ENCODE measurements at regions of chr4 and their contacts with region 1.

Region 1: DNA sequence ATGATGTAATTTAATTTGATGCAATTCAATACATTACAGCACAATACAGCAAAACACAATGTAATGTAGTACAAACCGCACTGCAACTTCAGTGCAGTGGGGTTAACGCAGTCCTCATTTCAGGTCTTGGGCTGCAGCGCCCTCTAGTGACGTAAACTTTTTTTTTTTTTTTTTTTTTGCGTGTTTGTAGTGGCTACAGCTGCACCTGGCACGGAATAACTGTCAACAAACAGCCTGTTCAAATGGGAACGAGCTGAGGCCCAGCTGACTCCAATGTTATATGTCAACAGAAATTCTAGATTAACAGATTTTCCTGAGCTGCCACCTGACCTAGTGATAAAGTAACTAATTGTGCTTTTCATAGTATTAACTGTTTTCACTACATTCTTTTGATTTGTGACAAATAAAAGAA is 33.5 kb upstream of the RASSF6 start:
- DNase-seq: peak; percentile 52
- ATAC-seq: peak; percentile 76 to 81
- H3K4me3 ChIP-seq: no peak overlapping the region
- H3K27ac ChIP-seq: no peak overlapping the region
- H3K4me1 ChIP-seq: peaks cover 6% of the 10 kb centered on the region
- H3K27me3 ChIP-seq: no peaks in the 10 kb centered on the region
- CTCF ChIP-seq: peak; percentile 52

Region 2: DNA sequence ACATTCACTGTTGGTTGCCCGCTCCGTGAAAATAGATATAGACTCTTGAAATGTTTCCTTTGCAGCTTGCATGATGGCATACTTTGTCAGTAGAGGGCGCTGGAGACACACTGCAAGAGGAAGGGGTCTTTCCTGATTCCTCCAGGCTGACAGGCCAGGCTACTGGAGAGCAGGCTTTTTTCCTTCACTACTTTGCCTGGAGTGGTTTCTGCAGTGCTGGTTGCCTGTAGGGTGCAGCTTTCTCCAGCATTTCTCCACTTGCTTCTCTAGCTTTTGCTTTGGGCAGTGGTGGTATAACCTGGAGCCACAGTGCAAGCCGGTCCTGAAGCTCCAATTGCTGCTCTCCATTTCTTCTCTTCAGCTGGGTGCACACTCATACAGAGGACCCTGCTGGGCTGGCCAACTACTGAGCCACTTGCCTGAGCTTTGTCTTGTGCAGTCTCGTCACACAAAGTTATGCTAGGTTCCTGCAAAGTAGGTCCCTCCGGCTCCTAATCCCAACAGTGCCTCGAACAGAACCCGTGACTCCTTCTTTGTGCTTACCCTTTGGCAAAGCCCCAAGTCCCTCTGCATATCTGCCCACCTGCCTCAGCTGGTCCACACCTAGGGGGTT is 79.8 kb before region 1 on chr4:
- intact Hi-C with region 1: loop called (anchors 5 kb)
- DNase-seq: peak; percentile 48
- ATAC-seq: peak; percentile 87 to 88
- H3K4me3 ChIP-seq: no peak overlapping the region
- H3K27ac ChIP-seq: no peak overlapping the region
- H3K4me1 ChIP-seq: no peaks in the 10 kb centered on the region
- H3K27me3 ChIP-seq: no peaks in the 10 kb centered on the region
- CTCF ChIP-seq: peak; percentile 77